ENCODE measurements at regions of chr9 and their contacts with region 1.

Region 1: DNA sequence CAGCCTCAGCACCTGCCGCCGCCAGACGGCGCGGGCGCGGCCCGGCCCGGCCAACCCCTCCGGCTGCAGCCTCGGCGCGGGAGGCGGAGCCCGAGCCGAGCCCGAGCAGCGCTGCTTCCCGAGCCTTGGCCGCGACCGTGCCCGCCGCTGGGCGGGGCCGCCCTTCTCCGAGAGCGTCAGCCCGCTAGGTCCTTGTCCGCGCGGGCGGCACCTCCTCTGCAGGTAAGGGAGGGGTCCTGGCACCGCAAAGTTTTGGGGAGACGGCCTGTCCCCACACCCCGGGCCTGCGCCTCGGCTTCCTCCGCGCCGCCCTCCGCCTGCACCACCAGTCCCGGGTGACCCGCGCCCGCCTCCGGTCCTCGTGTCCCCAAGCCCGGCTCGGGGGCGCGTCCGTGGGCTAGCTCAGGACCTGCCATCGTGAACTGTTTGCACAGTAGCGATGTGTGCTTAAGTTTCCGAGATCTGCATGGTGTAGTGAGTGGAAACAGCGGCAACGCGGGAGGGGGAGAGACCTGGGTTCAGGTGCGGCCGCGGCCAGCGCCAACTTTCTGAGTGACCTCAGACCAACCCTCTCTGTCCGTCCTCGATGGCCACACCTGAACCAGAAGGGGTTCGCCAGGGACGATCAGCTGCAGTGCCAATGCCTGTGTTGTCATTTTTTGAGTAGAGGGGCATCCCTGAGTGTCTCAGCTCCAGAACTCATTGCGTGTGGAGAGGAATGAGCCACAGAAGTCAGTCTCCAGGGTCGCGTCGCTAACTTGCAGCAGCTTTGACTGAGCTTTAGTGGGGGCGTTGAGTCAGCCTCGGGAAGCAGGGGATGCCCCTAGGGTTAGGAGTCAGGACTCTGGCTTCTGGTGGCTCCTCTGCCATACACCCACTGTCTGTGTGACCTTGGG is at the start of gene FRMPD1:
- DNase-seq: peak in 3 of 10 donors; percentile 22 to 70 (median 25)
- H3K4me3 ChIP-seq: peak within 1 kb of the TSS; percentile 55 to 98 (median 74)
- H3K27ac ChIP-seq: peak within 1 kb of the TSS in 18 of 59 donors; percentile 0 to 79 (median 32)
- H3K27me3 ChIP-seq: peaks cover 0 to 8% (median 0%) of the 10 kb centered on the region in 45 donors
- CTCF ChIP-seq: no peak
- total RNA-seq, gene FRMPD1: 2.1 to 6.9 (median 4.1) TPM

Region 2: GRCh38 chr9:37693260-37693659 is 42.1 kb after region 1 on chr9:
- intact Hi-C with region 1: no loop called
- DNase-seq: no peak
- H3K4me3 ChIP-seq: no peak overlapping the region
- H3K27ac ChIP-seq: no peak overlapping the region
- H3K27me3 ChIP-seq: no peaks in the 10 kb centered on the region
- CTCF ChIP-seq: no peak

Region 3: GRCh38 chr9:37740636-37741328 is 89.7 kb after region 1 on chr9:
- intact Hi-C with region 1: loop called in 1 of 2 experiments (anchors 5 kb)
- DNase-seq: no peak
- H3K4me3 ChIP-seq: no peak overlapping the region
- H3K27ac ChIP-seq: no peak overlapping the region
- H3K27me3 ChIP-seq: no peaks in the 10 kb centered on the region
- CTCF ChIP-seq: no peak

Measured in dorsolateral prefrontal cortex (tissue), 120 donors.